MCF 10A (cell line): ENCODE measurements at regions of chr11 and their contacts with region 1.

Region 1: GRCh38 chr11:101436511-101437142 is 147.2 kb downstream of the TRPC6 start:
- DNase-seq: peak; percentile 68
- H3K4me3 Mint-ChIP-seq: no peak overlapping the region
- H3K27ac Mint-ChIP-seq: no peak overlapping the region
- H3K4me1 Mint-ChIP-seq: peaks cover 15% of the 10 kb centered on the region
- H3K27me3 Mint-ChIP-seq: no peaks in the 10 kb centered on the region
- CTCF ChIP-seq: peak; percentile 77

Region 2: DNA sequence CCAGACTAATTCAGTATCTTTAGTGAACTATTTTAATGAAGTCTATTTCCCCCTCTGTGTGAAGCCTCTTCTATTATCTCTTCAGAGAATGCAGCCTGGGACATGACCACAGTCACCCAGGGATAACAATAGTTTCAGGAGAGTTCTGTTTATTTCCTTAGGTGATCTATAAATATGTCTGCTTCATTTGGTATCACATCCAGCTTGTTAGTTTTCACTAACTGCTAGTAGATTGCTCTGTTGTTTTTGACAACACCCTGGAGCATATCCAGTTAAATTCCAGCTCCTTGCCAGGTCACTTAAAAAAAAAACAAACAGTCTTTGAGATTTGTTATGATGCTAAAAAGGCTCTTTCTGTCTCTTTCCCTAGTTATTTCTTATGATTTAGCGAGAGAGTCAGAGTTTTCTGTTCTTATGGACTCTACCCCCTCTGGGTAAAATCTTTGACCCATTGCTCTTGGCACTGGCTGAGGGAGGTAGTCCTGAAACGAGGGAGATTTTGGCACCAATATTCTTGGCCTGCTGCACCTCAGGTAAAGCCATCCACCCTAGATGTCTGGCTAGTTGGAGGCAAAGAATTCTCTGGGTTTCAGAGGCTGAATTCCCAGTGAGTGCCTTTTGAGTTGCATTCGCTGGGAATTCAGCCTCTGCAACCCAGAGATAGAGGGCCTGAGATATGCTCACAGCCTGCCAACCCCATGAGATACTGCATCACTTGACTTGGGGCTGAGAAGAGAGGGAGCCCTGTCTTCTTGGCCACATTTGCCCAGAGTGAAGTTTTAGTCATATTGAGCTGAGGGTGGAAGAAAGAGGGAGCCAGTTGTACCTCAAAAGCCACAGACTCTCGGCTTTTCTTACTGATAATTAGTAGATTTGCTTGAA is 466.1 kb before region 1 on chr11:
- CTCF ChIA-PET with region 1: interaction called, 183 read pairs
- POLR2A ChIA-PET with region 1: no interaction called
- intact Hi-C with region 1: no loop called
- DNase-seq: no peak
- H3K4me3 Mint-ChIP-seq: no peak overlapping the region
- H3K27ac Mint-ChIP-seq: no peak overlapping the region
- H3K4me1 Mint-ChIP-seq: no peaks in the 10 kb centered on the region
- H3K27me3 Mint-ChIP-seq: no peaks in the 10 kb centered on the region
- CTCF ChIP-seq: no peak

Region 3: GRCh38 chr11:100980156-100980555 is 456.5 kb before region 1 on chr11:
- CTCF ChIA-PET with region 1: interaction called, 183 read pairs
- POLR2A ChIA-PET with region 1: no interaction called
- intact Hi-C with region 1: loop called (anchors 1 kb)
- DNase-seq: peak; percentile 30
- H3K4me3 Mint-ChIP-seq: no peak overlapping the region
- H3K27ac Mint-ChIP-seq: no peak overlapping the region
- H3K4me1 Mint-ChIP-seq: no peaks in the 10 kb centered on the region
- H3K27me3 Mint-ChIP-seq: no peaks in the 10 kb centered on the region
- CTCF ChIP-seq: no peak

Region 4: GRCh38 chr11:101390539-101390938 is 46.1 kb before region 1 on chr11:
- CTCF ChIA-PET with region 1: interaction called, 20 read pairs
- POLR2A ChIA-PET with region 1: no interaction called
- intact Hi-C with region 1: loop called (anchors 1 kb)
- DNase-seq: peak; percentile 16
- H3K4me3 Mint-ChIP-seq: no peak overlapping the region
- H3K27ac Mint-ChIP-seq: no peak overlapping the region
- H3K4me1 Mint-ChIP-seq: no peaks in the 10 kb centered on the region
- H3K27me3 Mint-ChIP-seq: peaks cover under 1% of the 10 kb centered on the region
- CTCF ChIP-seq: peak; percentile 16

Region 5: GRCh38 chr11:101835506-101836063 is 399.0 kb after region 1 on chr11:
- CTCF ChIA-PET with region 1: interaction called, 10 read pairs
- POLR2A ChIA-PET with region 1: no interaction called
- intact Hi-C with region 1: no loop called
- DNase-seq: peak; percentile 11
- H3K4me3 Mint-ChIP-seq: no peak overlapping the region
- H3K27ac Mint-ChIP-seq: no peak overlapping the region
- H3K4me1 Mint-ChIP-seq: peaks cover 6% of the 10 kb centered on the region
- H3K27me3 Mint-ChIP-seq: no peaks in the 10 kb centered on the region
- CTCF ChIP-seq: no peak